B cell (primary cell): ENCODE measurements at regions of chr12 and their contacts with region 1.

Region 1: GRCh38 chr12:49060237-49061156 is at the start of gene KMT2D:
- DNase-seq: peak; percentile 97
- ATAC-seq: peak; percentile 72
- H3K4me3 ChIP-seq: peak within 1 kb of the TSS; percentile 81 to 97 (median 91)
- H3K4me3 Mint-ChIP-seq: peak within 1 kb of the TSS; percentile 97
- H3K27ac ChIP-seq: peak within 1 kb of the TSS; percentile 77 to 88
- H3K27ac Mint-ChIP-seq: peak within 1 kb of the TSS; percentile 99
- H3K4me1 ChIP-seq: peaks cover 46 to 50% of the 10 kb centered on the region in 2 donors
- H3K4me1 Mint-ChIP-seq: peaks cover 50% of the 10 kb centered on the region
- H3K27me3 ChIP-seq: no peaks in the 10 kb centered on the region
- H3K27me3 Mint-ChIP-seq: no peaks in the 10 kb centered on the region
- CTCF ChIP-seq: no peak
- total RNA-seq, gene KMT2D: 179 and 199 TPM in 2 replicates

Region 2: GRCh38 chr12:47361389-47362021 is 1699.0 kb before region 1 on chr12:
- CTCF ChIA-PET with region 1: no interaction called
- POLR2A ChIA-PET with region 1: no interaction called
- intact Hi-C with region 1: no loop called
- DNase-seq: peak; percentile 76
- ATAC-seq: peak; percentile 51
- H3K4me3 ChIP-seq: peak overlapping the region; percentile 24 to 52 (median 47)
- H3K4me3 Mint-ChIP-seq: peak overlapping the region; percentile 87
- H3K27ac ChIP-seq: peak overlapping the region; percentile 93 to 96
- H3K27ac Mint-ChIP-seq: peak overlapping the region; percentile 98
- H3K4me1 ChIP-seq: peaks cover 71% of the 10 kb centered on the region in 2 donors
- H3K4me1 Mint-ChIP-seq: peaks cover 62% of the 10 kb centered on the region
- H3K27me3 ChIP-seq: no peaks in the 10 kb centered on the region
- H3K27me3 Mint-ChIP-seq: no peaks in the 10 kb centered on the region
- CTCF ChIP-seq: no peak

Region 3: DNA sequence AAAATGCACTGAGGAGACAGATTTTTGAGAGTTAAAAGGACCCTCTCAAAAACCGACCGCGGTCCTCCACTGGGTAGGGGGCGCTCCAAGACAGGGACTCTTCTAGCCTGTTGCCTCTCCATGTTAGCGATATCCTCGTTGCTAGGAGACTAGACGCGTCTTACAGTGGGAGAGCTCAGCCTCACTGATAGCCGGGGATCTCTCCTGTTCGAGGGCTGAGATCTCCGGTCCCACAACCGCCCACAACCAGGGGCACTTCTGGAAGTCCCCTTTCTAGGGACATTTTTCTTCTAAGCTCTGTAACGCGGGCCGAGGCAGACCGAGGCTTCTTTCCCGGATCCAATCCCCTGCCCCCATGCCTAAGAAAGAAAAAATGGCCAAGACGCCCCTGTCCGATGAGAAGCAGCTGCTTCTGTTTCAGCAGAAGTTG is 156.5 kb before region 1 on chr12:
- CTCF ChIA-PET with region 1: no interaction called
- POLR2A ChIA-PET with region 1: no interaction called
- intact Hi-C with region 1: no loop called
- DNase-seq: peak; percentile 84
- ATAC-seq: peak; percentile 91
- H3K4me3 ChIP-seq: peak overlapping the region in 4 of 5 experiments; percentile 11 to 49 (median 40)
- H3K4me3 Mint-ChIP-seq: peak overlapping the region; percentile 83
- H3K27ac ChIP-seq: no peak overlapping the region
- H3K27ac Mint-ChIP-seq: no peak overlapping the region
- H3K4me1 ChIP-seq: peaks cover 11 to 12% of the 10 kb centered on the region in 2 donors
- H3K4me1 Mint-ChIP-seq: peaks cover 7% of the 10 kb centered on the region
- H3K27me3 ChIP-seq: peaks cover 0 to 5% (median 2%) of the 10 kb centered on the region in 4 experiments
- H3K27me3 Mint-ChIP-seq: peaks cover 19% of the 10 kb centered on the region
- CTCF ChIP-seq: peak; percentile 60

Region 4: DNA sequence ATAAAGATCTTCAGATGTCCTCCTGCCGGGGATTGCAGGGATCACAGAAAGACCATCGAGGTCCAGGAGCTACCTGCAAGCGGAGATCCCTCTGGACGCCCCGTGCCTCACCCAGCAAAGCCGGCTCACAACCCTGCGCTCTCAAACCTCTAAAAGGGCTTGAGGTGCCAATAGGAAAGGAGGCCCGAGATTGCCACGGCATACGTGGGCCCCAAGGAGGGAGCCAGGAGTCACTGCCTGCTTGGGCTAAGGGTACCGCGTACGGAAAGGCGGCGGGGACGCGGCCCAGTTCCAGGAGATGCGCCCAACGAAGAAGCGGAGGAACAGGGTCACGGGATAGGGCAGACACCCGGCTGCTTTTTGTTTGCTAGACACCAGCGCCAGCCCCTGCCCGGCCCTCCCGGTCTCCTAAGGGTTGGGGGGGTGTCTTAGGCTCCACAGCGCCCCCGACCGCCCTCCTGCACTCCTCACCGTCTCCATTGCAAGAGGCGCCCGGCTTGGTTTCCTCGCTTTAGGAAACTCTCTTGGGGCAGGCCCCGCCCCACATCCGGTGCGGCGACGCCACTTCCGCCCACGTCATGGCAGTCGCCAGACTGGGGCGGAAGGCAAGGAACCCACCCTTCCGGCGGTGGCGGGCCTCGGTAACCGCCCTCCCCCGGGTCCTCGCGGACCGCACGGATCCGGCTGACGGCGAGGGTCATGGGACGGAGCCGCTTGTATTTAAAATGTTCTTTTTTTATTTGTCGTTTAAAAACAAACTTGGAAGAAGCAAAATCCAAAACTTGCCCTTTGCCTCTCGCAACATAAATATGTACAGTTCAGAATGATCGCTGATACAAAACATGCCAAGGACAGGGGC is 42.0 kb before region 1 on chr12 and contains the start of gene PRKAG1:
- CTCF ChIA-PET with region 1: interaction called, 5 read pairs
- POLR2A ChIA-PET with region 1: interaction called, 6 read pairs
- intact Hi-C with region 1: loop called (anchors 1 kb)
- DNase-seq: peak; percentile 98
- ATAC-seq: peak; percentile 88
- H3K4me3 ChIP-seq: peak within 1 kb of the TSS; percentile 79 to 88 (median 86)
- H3K4me3 Mint-ChIP-seq: peak within 1 kb of the TSS; percentile 91
- H3K27ac ChIP-seq: peak within 1 kb of the TSS; percentile 95 to 99
- H3K27ac Mint-ChIP-seq: peak within 1 kb of the TSS; percentile 98
- H3K4me1 ChIP-seq: peaks cover 18 to 21% of the 10 kb centered on the region in 2 donors
- H3K4me1 Mint-ChIP-seq: peaks cover 29% of the 10 kb centered on the region
- H3K27me3 ChIP-seq: no peaks in the 10 kb centered on the region
- H3K27me3 Mint-ChIP-seq: no peaks in the 10 kb centered on the region
- CTCF ChIP-seq: peak; percentile 74
- total RNA-seq, gene PRKAG1: 58.6 and 60.0 TPM in 2 replicates

Region 5: DNA sequence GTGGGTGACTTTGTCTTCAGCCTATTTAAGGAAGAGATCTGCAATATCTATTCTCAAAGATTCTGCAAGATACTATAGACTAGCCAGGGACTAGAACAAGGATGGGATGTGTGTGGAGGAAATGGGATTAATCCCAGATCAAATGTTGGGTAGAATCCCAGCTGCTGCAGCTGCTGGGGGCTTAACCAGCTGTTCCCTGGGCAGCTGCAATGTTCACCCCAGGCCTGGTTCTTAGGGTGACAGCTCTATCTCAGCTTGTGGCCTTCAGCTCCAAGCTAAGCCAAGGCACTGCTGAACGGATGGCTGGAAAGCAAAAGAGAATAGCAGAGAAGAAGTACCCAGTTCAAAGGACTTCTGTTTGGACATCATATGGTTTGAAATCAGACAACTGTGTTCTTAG is 19.3 kb after region 1 on chr12:
- CTCF ChIA-PET with region 1: interaction called, 144 read pairs
- POLR2A ChIA-PET with region 1: no interaction called
- intact Hi-C with region 1: no loop called
- DNase-seq: no peak
- ATAC-seq: no peak
- H3K4me3 ChIP-seq: no peak overlapping the region
- H3K4me3 Mint-ChIP-seq: no peak overlapping the region
- H3K27ac ChIP-seq: no peak overlapping the region
- H3K27ac Mint-ChIP-seq: no peak overlapping the region
- H3K4me1 ChIP-seq: no peaks in the 10 kb centered on the region
- H3K4me1 Mint-ChIP-seq: no peaks in the 10 kb centered on the region
- H3K27me3 ChIP-seq: no peaks in the 10 kb centered on the region
- H3K27me3 Mint-ChIP-seq: peaks cover 12% of the 10 kb centered on the region
- CTCF ChIP-seq: no peak

Region 6: DNA sequence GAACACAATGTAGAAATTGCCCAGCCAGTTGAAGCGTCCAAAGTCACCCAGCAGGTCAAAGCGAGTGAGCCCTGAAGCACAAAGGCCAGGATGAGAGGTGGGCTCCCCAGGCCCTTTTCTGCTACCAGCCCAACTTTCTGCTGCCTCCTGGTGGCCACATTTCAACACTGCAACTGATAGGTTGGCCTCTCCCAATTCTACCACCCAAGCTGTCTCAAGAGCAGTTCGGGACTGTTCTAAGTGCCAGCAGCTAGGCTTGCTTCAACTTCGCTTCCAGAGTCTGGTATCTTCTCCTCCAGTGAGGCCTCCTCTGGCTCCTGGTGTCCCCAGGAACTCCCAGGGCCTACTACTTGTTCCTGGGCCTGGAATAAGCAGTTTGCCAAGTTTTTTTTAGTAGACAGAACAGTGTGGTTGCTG is 37.5 kb after region 1 on chr12:
- CTCF ChIA-PET with region 1: interaction called, 199 read pairs
- POLR2A ChIA-PET with region 1: no interaction called
- intact Hi-C with region 1: loop called (anchors 1 kb)
- DNase-seq: peak; percentile 74
- ATAC-seq: peak; percentile 77
- H3K4me3 ChIP-seq: no peak overlapping the region
- H3K4me3 Mint-ChIP-seq: no peak overlapping the region
- H3K27ac ChIP-seq: no peak overlapping the region
- H3K27ac Mint-ChIP-seq: peak overlapping the region; percentile 20
- H3K4me1 ChIP-seq: peaks cover 15 to 16% of the 10 kb centered on the region in 2 donors
- H3K4me1 Mint-ChIP-seq: peaks cover 18% of the 10 kb centered on the region
- H3K27me3 ChIP-seq: peaks cover 0 to 22% (median 17%) of the 10 kb centered on the region in 4 experiments
- H3K27me3 Mint-ChIP-seq: peaks cover 17% of the 10 kb centered on the region
- CTCF ChIP-seq: peak; percentile 80

Region 7: GRCh38 chr12:49198431-49199155 is 138.1 kb after region 1 on chr12:
- CTCF ChIA-PET with region 1: no interaction called
- POLR2A ChIA-PET with region 1: no interaction called
- intact Hi-C with region 1: no loop called
- DNase-seq: no peak
- ATAC-seq: no peak
- H3K4me3 ChIP-seq: no peak overlapping the region
- H3K4me3 Mint-ChIP-seq: no peak overlapping the region
- H3K27ac ChIP-seq: no peak overlapping the region
- H3K27ac Mint-ChIP-seq: no peak overlapping the region
- H3K4me1 ChIP-seq: peaks cover 10 to 12% of the 10 kb centered on the region in 2 donors
- H3K4me1 Mint-ChIP-seq: peaks cover 16% of the 10 kb centered on the region
- H3K27me3 ChIP-seq: no peaks in the 10 kb centered on the region
- H3K27me3 Mint-ChIP-seq: peaks cover 7% of the 10 kb centered on the region
- CTCF ChIP-seq: no peak

Region 8: GRCh38 chr12:49232940-49233841 is 172.7 kb after region 1 on chr12:
- CTCF ChIA-PET with region 1: interaction called, 60 read pairs
- POLR2A ChIA-PET with region 1: interaction called, 6 read pairs
- intact Hi-C with region 1: loop called (anchors 1 kb)
- DNase-seq: no peak
- ATAC-seq: no peak
- H3K4me3 ChIP-seq: peak overlapping the region; percentile 46 to 72 (median 64)
- H3K4me3 Mint-ChIP-seq: peak overlapping the region; percentile 96
- H3K27ac ChIP-seq: peak overlapping the region; percentile 56 to 73
- H3K27ac Mint-ChIP-seq: peak overlapping the region; percentile 90
- H3K4me1 ChIP-seq: peaks cover 5 to 17% of the 10 kb centered on the region in 2 donors
- H3K4me1 Mint-ChIP-seq: peaks cover 17% of the 10 kb centered on the region
- H3K27me3 ChIP-seq: no peaks in the 10 kb centered on the region
- H3K27me3 Mint-ChIP-seq: no peaks in the 10 kb centered on the region
- CTCF ChIP-seq: no peak

Region 9: DNA sequence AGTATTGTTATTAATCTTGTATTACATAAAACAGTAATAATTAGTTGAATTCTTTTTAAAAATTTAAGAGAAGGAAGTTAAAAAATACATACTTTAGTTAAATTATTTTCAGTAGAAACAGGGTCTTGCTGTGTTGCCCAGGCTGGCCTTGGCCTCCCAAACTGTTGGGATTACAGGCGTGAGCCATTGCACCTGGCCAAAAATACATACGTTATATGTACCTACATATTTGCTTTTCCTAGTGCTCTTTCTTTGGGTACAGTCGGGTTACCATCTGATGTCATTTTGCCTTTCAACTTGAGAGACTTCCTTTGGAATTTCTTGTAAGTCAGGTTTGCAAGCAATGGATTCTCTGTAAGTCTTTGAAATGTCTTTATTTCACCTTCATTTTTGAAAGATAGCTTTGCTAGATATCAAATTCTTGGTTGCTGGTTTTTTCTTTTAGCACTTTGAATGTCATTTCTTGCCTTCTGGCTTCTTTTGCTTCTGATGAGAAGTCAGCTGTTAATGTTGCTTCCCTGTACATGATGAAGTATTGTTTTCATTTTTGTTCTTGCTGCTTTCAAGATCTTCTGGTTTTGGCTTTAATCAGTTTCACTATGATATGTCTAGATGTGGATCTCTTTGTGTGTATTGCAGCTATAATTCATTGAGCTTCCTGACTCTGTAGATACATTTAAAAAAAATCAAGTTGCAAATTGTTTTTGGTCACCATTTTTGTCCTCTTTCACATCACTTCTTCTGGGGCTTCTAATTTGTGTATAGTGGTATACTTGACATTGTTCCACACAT is 391.2 kb after region 1 on chr12:
- CTCF ChIA-PET with region 1: no interaction called
- POLR2A ChIA-PET with region 1: no interaction called
- intact Hi-C with region 1: no loop called
- DNase-seq: no peak
- ATAC-seq: no peak
- H3K4me3 ChIP-seq: no peak overlapping the region
- H3K4me3 Mint-ChIP-seq: no peak overlapping the region
- H3K27ac ChIP-seq: no peak overlapping the region
- H3K27ac Mint-ChIP-seq: no peak overlapping the region
- H3K4me1 ChIP-seq: no peaks in the 10 kb centered on the region
- H3K4me1 Mint-ChIP-seq: peaks cover 2% of the 10 kb centered on the region
- H3K27me3 ChIP-seq: no peaks in the 10 kb centered on the region
- H3K27me3 Mint-ChIP-seq: no peaks in the 10 kb centered on the region
- CTCF ChIP-seq: no peak